Keratinocyte (primary cell): ENCODE measurements at regions of chr5 and their contacts with region 1.

Region 1: GRCh38 chr5:135829681-135830383 is 4.6 kb upstream of the SLC25A48 start:
- DNase-seq: no peak
- H3K4me3 ChIP-seq: no peak overlapping the region
- H3K27ac ChIP-seq: no peak overlapping the region
- H3K4me1 ChIP-seq: peaks cover 3% of the 10 kb centered on the region
- H3K27me3 ChIP-seq: peaks cover 24% of the 10 kb centered on the region
- CTCF ChIP-seq: peak in 2 of 3 experiments; percentile 85 to 90

Region 2: GRCh38 chr5:135551593-135552447 is 278.0 kb before region 1 on chr5:
- dilution Hi-C with region 1: loop called (anchors 10 kb)
- DNase-seq: no peak
- H3K4me3 ChIP-seq: no peak overlapping the region
- H3K27ac ChIP-seq: no peak overlapping the region
- H3K4me1 ChIP-seq: peaks cover 4% of the 10 kb centered on the region
- H3K27me3 ChIP-seq: peaks cover 24% of the 10 kb centered on the region
- CTCF ChIP-seq: peak; percentile 85 to 95 (median 93)

Region 3: GRCh38 chr5:135729321-135729786 is 100.5 kb before region 1 on chr5:
- dilution Hi-C with region 1: loop called (anchors 10 kb)
- DNase-seq: no peak
- H3K4me3 ChIP-seq: no peak overlapping the region
- H3K27ac ChIP-seq: no peak overlapping the region
- H3K4me1 ChIP-seq: peaks cover 5% of the 10 kb centered on the region
- H3K27me3 ChIP-seq: no peaks in the 10 kb centered on the region
- CTCF ChIP-seq: peak in 2 of 3 experiments; percentile 29 to 49